GM18951 (cell line): ENCODE measurements at regions of chr11 and their contacts with region 1.

Region 1: DNA sequence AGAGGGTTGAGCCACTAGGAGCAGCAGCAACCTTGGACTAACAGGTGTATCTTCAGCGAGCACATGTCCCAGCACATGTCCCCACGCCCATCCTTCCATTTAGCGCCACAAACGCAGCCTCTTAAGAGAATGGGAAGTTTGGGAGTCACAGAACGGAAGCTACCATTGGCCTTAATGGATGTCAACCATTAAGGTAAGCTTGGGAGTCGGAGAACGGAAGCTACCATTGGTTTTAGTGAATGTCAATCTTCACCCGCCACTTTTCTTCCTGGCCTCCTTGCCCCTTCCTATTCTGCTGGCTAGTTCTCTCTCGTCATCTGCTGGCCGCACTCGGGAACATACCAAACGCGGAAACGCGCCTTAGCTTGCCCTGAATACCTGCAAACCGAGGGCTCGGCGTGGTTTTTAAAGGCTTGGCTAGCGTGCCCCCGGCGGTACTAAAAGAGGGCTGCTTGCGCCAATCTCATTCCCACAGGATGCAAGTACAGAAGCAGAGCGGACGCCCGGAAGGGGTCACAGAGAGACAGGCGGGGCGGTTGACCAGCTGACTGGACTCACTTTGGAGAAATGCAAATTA is 24.3 kb downstream of the GLYATL1 start:
- POLR2A ChIP-seq: no peak

Region 2: DNA sequence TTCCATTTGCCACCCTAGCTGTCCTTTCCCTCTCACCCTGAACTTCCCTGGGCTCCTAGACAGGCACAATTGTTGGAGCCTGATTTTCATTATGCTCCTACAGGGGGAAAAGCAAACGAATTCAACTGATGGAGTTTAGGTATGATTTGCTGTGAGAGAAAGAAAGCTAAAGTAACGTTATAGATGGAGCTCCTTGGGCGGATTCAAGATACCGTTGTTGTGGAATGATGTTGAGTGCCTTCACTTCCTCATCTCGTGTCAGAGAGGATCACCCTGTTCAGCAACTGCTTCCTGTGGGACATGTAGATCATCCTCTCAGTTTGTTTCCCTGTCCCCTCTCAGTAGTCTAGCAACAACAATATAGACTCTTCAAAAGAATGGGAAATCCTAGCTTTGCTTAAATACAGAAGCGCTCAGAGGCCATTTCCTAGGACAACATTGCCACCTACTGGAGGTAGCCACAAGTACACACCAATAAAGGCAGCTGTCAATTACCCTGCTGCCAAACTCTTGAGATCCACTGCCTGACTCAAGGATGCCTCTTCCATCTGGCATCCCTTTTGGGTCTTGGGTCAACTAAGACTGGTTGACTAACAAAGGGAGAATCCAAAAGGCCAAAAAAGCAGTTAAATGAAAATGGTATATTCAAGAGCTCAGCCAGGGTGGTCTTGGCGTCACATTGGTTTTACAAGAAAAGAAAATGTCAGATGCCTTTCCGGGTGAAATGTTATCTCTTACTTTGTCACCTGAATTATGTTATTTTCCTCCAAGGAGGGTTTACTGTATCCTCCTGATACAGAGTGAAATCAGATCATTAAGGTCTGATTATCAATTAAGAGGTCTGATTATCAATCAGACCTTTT is 194.8 kb after region 1 on chr11:
- in situ Hi-C with region 1: loop called (anchors 10 kb)
- POLR2A ChIP-seq: no peak